Right ventricle myocardium superior (tissue), 1 donor: ENCODE measurements at regions of chr22 and their contacts with region 1.

Region 1: DNA sequence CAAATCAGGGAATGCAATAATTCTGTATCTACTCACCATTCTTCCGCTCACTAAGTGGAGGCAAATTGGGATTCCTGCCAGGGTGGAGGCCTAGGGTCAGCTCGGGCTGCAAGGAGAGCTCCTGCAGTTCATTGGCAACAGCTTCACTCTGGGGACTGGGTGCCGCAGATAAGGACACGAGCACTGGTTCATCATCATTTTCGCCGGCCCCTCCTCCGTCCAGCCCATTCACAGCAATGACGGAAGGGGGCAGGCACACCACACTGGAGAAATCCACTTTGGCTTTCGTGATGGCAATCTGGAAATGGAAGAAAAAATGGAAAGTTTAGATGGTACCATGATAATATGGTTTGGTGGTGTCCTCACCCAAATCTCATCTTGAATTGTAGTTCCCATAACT is 84.4 kb downstream of the MRTFA start:
- DNase-seq: peak; percentile 82
- ATAC-seq: peak; percentile 93

Region 2: DNA sequence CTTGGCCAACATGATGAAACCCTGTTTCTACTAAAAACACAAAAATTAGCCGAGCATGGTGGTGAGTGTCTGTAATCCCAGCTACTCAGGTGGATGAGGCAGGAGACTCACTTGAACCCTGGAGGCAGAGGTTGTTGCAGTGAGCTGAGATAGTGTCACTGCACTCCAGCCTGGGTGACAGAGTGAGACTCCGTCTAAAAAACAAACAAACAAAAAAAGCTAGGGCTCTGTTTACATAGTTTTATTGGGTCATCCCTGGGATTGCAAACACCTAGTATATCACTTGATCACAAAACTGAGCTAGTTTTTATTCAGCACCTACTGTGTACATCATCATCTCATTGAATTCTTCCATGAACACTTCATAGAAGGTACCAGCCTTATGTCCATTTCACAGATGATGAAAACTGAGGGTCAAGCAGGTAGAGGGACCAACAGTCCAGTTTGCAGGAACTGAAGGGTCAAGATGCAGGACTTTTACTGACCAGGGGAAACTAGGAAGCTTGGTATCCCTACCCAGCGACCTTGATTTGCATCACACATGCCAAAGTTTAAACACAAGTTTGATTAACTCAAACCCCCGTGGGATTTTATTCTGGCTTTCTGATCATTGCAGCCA is 93.6 kb after region 1 on chr22:
- intact Hi-C with region 1: loop called (anchors 2 kb)
- DNase-seq: no peak
- ATAC-seq: no peak

Region 3: DNA sequence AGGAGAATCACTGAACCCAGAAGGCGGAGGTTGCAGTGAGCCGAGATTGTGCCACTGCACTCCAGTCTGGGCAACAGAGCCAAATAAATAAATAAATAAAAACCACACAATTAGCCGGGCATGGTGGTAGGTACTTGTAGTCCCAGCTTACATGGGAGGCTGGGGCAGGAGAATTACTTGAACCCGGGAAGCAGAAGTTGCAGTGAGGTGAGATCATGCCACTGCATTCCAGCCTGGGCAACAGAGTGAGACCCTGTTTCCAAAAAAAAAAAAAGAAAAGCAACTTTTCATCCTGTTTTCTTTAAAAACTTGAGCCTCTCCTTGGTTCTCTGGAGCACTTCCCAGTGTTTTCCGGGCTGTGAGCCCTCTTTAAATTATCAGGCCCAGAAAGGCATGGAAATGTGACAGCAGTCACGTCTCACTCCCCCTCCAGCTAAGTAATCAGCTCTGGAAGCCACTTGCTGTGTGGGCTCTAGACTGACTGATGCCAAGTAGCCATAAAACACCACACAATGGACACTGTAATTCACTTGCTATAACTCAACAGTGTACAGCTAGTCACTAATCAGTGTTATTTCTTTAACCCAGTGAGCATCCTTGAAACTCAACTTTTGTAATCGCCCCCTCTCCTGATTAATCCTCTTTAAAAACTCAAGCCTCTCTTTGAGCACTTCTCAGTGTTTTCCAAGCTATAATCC is 114.2 kb after region 1 on chr22:
- intact Hi-C with region 1: no loop called
- DNase-seq: peak; percentile 58
- ATAC-seq: peak; percentile 85